ENCODE measurements at regions of chr6 and their contacts with region 1.

Region 1: GRCh38 chr6:164106345-164106769 is 691.8 kb downstream of the QKI start:
- DNase-seq: peak; percentile 37
- H3K4me3 Mint-ChIP-seq: no peak overlapping the region
- H3K27ac Mint-ChIP-seq: peak overlapping the region; percentile 97
- H3K4me1 Mint-ChIP-seq: peaks cover 43% of the 10 kb centered on the region
- H3K27me3 Mint-ChIP-seq: no peaks in the 10 kb centered on the region
- CTCF ChIP-seq: no peak

Region 2: GRCh38 chr6:162856885-162857284 is 1249.5 kb before region 1 on chr6:
- CTCF ChIA-PET with region 1: no interaction called
- POLR2A ChIA-PET with region 1: no interaction called
- intact Hi-C with region 1: loop called (anchors 5 kb)
- DNase-seq: peak; percentile 86
- H3K4me3 Mint-ChIP-seq: peak overlapping the region; percentile 66
- H3K27ac Mint-ChIP-seq: peak overlapping the region; percentile 81
- H3K4me1 Mint-ChIP-seq: peaks cover 9% of the 10 kb centered on the region
- H3K27me3 Mint-ChIP-seq: no peaks in the 10 kb centered on the region
- CTCF ChIP-seq: peak; percentile 59

Region 3: GRCh38 chr6:163585932-163586437 is 520.4 kb before region 1 on chr6:
- CTCF ChIA-PET with region 1: no interaction called
- POLR2A ChIA-PET with region 1: no interaction called
- intact Hi-C with region 1: loop called (anchors 2 kb)
- DNase-seq: peak; percentile 90
- H3K4me3 Mint-ChIP-seq: peak overlapping the region; percentile 41
- H3K27ac Mint-ChIP-seq: peak overlapping the region; percentile 83
- H3K4me1 Mint-ChIP-seq: peaks cover 32% of the 10 kb centered on the region
- H3K27me3 Mint-ChIP-seq: no peaks in the 10 kb centered on the region
- CTCF ChIP-seq: no peak

Region 4: GRCh38 chr6:163956571-163957407 is 149.6 kb before region 1 on chr6:
- CTCF ChIA-PET with region 1: interaction called, 3 read pairs
- POLR2A ChIA-PET with region 1: interaction called, 3 read pairs
- intact Hi-C with region 1: loop called (anchors 2 kb)
- DNase-seq: peak; percentile 86
- H3K4me3 Mint-ChIP-seq: no peak overlapping the region
- H3K27ac Mint-ChIP-seq: no peak overlapping the region
- H3K4me1 Mint-ChIP-seq: peaks cover 11% of the 10 kb centered on the region
- H3K27me3 Mint-ChIP-seq: no peaks in the 10 kb centered on the region
- CTCF ChIP-seq: peak; percentile 79

Region 5: DNA sequence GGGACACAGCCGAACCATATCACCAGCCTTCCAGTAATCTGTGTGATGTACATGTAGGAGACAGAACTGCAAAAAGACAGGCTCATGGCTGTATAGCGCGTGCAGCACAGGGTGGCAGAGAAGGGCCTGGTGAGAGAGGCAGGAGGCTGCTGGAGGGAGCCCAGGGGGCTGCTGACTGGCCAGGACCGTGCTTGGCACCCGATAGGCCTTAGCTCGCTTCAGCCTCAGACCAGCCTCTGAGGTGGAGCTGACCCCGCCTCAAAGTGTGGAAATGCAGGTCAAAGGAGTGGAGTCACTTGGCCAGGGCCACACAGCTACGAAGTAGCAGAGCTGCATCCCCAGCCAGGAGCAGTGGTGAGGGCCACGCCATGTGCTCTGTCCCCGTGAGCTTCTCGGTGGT is 15.8 kb after region 1 on chr6:
- CTCF ChIA-PET with region 1: interaction called, 11 read pairs
- POLR2A ChIA-PET with region 1: interaction called, 3 read pairs
- intact Hi-C with region 1: no loop called
- DNase-seq: no peak
- H3K4me3 Mint-ChIP-seq: no peak overlapping the region
- H3K27ac Mint-ChIP-seq: no peak overlapping the region
- H3K4me1 Mint-ChIP-seq: no peaks in the 10 kb centered on the region
- H3K27me3 Mint-ChIP-seq: no peaks in the 10 kb centered on the region
- CTCF ChIP-seq: no peak